T-cell (primary cell): ENCODE measurements at regions of chr9 and their contacts with region 1.

Region 1: GRCh38 chr9:6353851-6354686 is 25.9 kb downstream of the TPD52L3 start:
- DNase-seq: peak in 19 of 35 experiments; percentile 1 to 74 (median 8)
- ATAC-seq: peak; percentile 74 to 85 (median 82)
- H3K4me3 ChIP-seq: no peak overlapping the region
- H3K4me3 Mint-ChIP-seq: no peak overlapping the region
- H3K27ac ChIP-seq: no peak overlapping the region
- H3K27ac Mint-ChIP-seq: peak overlapping the region in 1 of 2 donors; percentile 25
- H3K4me1 ChIP-seq: no peaks in the 10 kb centered on the region
- H3K4me1 Mint-ChIP-seq: peaks cover 0 to 4% (median 0%) of the 10 kb centered on the region in 3 donors
- H3K27me3 ChIP-seq: peaks cover 0 to 3% of the 10 kb centered on the region in 2 experiments
- H3K27me3 Mint-ChIP-seq: peaks cover 3% of the 10 kb centered on the region in 2 donors

Region 2: DNA sequence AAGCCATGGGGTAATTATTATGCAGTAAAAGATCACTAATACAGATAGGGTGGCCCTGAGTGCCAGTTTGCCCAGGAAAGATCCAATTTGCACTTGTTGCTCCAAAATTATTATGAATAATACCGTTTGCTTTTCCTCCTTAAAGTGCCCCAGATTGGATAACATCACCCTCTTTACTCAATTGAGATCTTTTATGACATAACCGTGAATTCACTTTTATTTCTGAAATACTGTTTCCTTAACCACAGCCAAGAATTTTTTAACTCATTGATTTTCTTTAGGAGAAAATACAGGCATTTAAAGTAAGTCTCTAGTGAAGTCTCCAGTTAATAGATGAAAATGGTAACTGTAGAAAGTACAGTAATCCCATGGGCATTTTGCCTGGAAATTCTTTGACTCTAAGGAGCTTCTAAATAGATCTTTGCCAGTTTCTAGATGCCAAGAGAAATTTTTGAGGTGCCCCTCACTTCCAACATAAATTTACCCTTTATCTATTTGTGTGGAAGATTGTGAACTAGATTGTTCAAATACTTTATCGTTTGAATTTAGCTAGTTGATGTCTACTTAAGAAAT is 158.1 kb after region 1 on chr9:
- CTCF ChIA-PET with region 1: interaction called, 3 to 12 read pairs
- POLR2A ChIA-PET with region 1: no interaction called
- DNase-seq: no peak
- ATAC-seq: no peak
- H3K4me3 ChIP-seq: no peak overlapping the region
- H3K4me3 Mint-ChIP-seq: no peak overlapping the region
- H3K27ac ChIP-seq: no peak overlapping the region
- H3K27ac Mint-ChIP-seq: no peak overlapping the region
- H3K4me1 ChIP-seq: no peaks in the 10 kb centered on the region
- H3K4me1 Mint-ChIP-seq: no peaks in the 10 kb centered on the region
- H3K27me3 ChIP-seq: no peaks in the 10 kb centered on the region
- H3K27me3 Mint-ChIP-seq: no peaks in the 10 kb centered on the region

Region 3: DNA sequence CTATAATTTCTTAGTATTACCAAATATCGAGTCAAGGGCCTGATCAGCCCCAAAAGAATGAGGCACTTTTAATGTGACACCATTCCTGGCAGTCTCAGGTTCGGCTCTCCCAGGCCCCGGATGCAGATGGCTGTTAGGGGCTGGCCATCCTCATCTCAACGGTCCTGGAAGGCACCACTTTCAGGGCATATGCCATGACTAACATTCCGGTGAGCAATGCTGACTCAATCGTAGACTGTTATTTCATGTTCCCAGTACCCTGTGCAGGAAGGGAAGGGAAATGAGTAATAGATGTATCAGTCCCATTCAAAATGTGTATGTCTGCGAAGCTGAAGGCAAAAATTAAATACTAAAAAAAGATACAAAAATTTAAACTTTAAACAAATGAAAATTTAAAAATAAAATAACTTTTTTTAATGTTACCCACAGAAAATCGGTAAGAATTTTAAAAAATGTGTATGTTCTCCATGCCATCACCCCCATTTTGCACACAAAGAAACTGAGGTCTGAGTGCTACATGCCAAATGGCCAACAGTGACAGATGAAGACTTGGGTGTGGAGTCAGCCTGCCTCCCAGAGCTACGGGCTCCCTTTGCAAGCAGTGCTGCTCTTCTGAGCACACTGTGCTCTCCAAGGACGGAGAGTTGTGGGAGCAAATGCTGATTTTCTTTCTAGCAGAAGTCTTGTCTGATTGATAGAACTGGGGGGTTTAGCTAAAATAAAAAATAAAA is 212.5 kb after region 1 on chr9:
- CTCF ChIA-PET with region 1: interaction called, 20 to 27 read pairs
- POLR2A ChIA-PET with region 1: no interaction called
- DNase-seq: no peak
- ATAC-seq: peak in 1 of 4 experiments; percentile 35
- H3K4me3 ChIP-seq: no peak overlapping the region
- H3K4me3 Mint-ChIP-seq: no peak overlapping the region
- H3K27ac ChIP-seq: no peak overlapping the region
- H3K27ac Mint-ChIP-seq: no peak overlapping the region
- H3K4me1 ChIP-seq: no peaks in the 10 kb centered on the region
- H3K4me1 Mint-ChIP-seq: peaks cover 0 to 6% (median 0%) of the 10 kb centered on the region in 3 donors
- H3K27me3 ChIP-seq: peaks cover 0 to 3% of the 10 kb centered on the region in 2 experiments
- H3K27me3 Mint-ChIP-seq: peaks cover 4 to 10% of the 10 kb centered on the region in 2 donors